BJ (cell line): ENCODE measurements at regions of chr2 and their contacts with region 1.

Region 1: GRCh38 chr2:96760036-96760985 is at the start of gene CNNM4:
- DNase-seq: peak; percentile 43
- H3K4me3 ChIP-seq: peak within 1 kb of the TSS; percentile 70
- H3K27me3 ChIP-seq: no peaks in the 10 kb centered on the region
- CTCF ChIP-seq: peak; percentile 25; the same call in 1 of the 2 replicates
- polyA plus RNA-seq, gene CNNM4: 4.4 and 7.2 TPM in 2 replicates

Region 2: DNA sequence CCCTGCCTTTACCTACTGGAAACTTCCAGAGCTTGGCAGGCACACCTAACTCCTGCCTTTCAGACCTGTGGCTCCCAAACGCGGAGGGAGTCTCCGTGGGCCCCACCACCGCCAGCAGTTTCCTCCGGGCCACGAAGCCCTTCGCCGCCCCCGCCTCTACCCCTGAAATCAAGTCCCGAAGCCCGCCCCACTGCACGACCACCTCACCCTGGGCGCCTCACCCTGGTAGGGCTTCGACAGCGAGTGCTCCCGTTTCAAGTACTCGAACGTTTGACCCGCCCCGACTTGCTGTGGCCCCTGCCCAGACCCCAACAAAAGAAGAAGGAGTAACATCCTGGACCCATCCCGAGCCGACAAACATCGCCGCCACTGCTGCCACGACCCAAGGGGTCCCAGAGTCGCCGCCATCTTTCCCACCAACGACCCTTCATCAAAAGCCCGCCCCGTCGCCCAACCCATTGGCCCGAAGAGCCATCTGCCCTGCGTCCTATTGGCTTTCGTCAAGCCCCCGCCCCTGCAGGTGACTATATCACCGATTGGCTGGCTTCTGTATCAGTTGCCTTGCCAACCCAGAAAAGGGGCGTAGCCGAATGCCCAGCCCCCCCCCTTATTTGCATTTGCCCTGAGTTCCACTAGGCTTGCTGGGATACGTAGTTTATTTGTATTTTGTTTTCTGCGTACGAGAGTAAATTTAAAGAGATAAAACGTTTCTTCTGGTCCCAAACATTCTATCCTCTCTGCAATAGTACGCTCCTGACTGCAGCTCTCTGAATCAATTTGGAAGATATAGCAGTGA is 20.5 kb before region 1 on chr2 and contains the start of gene LMAN2L:
- CTCF ChIA-PET with region 1: interaction called, 15 read pairs
- POLR2A ChIA-PET with region 1: no interaction called
- DNase-seq: peak; percentile 91
- H3K4me3 ChIP-seq: peak within 1 kb of the TSS; percentile 81
- H3K27me3 ChIP-seq: no peaks in the 10 kb centered on the region; the same call in 1 of the 2 replicates
- CTCF ChIP-seq: peak; percentile 26; the same call in 1 of the 2 replicates
- polyA plus RNA-seq, gene LMAN2L: 29.6 and 30.8 TPM in 2 replicates

Region 3: DNA sequence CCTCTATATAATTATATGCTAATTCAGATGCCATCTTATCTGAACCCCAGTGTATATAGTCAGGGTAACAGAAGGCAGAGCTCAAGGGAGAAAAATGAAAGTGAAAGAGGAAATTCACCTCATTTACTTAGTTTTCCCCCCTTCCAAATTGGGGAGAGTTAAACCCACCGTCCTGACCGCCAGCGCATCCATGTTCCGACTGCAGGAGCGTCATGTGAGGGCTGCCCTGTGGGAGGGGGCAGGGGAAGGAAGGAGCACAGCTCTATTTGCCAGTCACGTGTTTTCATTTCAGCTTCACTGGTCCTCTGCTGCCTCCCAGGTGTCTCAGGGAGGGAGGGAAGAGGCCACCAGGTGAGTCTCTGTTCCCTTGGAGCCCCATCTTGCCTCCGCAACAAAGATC is 13.6 kb after region 1 on chr2:
- CTCF ChIA-PET with region 1: interaction called, 13 read pairs
- POLR2A ChIA-PET with region 1: no interaction called
- DNase-seq: no peak
- H3K4me3 ChIP-seq: no peak overlapping the region
- H3K27me3 ChIP-seq: no peaks in the 10 kb centered on the region
- CTCF ChIP-seq: no peak

Region 4: GRCh38 chr2:96788442-96789244 is 28.3 kb after region 1 on chr2:
- CTCF ChIA-PET with region 1: interaction called, 10 read pairs
- POLR2A ChIA-PET with region 1: no interaction called
- DNase-seq: no peak
- H3K4me3 ChIP-seq: no peak overlapping the region
- H3K27me3 ChIP-seq: no peaks in the 10 kb centered on the region
- CTCF ChIP-seq: no peak

Region 5: GRCh38 chr2:96971926-96972444 is 211.7 kb after region 1 on chr2:
- CTCF ChIA-PET with region 1: no interaction called
- POLR2A ChIA-PET with region 1: interaction called, 10 read pairs
- DNase-seq: no peak
- H3K4me3 ChIP-seq: no peak overlapping the region
- H3K27me3 ChIP-seq: peaks cover 2% of the 10 kb centered on the region; the same call in 1 of the 2 replicates
- CTCF ChIP-seq: no peak